ENCODE measurements at regions of chrX and their contacts with region 1.

Region 1: DNA sequence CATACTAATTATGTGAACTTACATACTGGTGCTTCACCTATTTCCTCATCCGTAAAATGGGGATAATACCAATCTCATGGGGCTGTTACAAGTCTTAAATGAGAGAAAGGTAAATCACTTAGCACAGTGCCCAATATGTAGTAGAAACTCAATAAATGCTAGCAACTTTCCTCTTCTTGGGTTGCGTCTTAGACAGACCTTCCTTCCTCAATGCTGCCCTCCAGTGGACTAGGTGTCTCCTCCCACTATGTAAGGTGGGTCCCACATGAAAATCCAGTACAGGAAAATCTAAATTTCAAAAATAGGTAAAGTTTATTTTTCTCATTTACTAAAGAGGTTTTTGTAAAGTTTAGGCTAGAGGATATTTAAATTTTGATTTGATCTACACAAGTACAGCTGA is 20.6 kb downstream of the ZDHHC9 start:
- DNase-seq: no peak
- H3K4me3 ChIP-seq: no peak overlapping the region
- H3K27ac ChIP-seq: no peak overlapping the region
- H3K4me1 ChIP-seq: no peaks in the 10 kb centered on the region
- H3K27me3 ChIP-seq: no peaks in the 10 kb centered on the region
- CTCF ChIP-seq: peak; percentile 17 to 53 (median 49)
- EP300 ChIP-seq: no peak
- POLR2A ChIP-seq: no peak
- RAD21 ChIP-seq: peak; percentile 48 to 60

Region 2: GRCh38 chrX:129606918-129607317 is 216.2 kb before region 1 on chrX:
- CTCF ChIA-PET with region 1: interaction called, 10 read pairs
- POLR2A ChIA-PET with region 1: no interaction called
- DNase-seq: peak in 1 of 2 experiments; percentile 72
- H3K4me3 ChIP-seq: no peak overlapping the region
- H3K27ac ChIP-seq: no peak overlapping the region
- H3K4me1 ChIP-seq: no peaks in the 10 kb centered on the region; a peak in 2 of 7 replicates
- H3K27me3 ChIP-seq: 0 out of 7 replicates have a peak, but pooled peaks cover 0 to 2% (median 0%) of the 10 kb centered on the region in 4 experiments
- CTCF ChIP-seq: peak; percentile 12 to 67 (median 65)
- EP300 ChIP-seq: no peak
- POLR2A ChIP-seq: no peak
- RAD21 ChIP-seq: peak; percentile 78 to 85